ENCODE measurements at regions of chr6 and their contacts with region 1.

Region 1: DNA sequence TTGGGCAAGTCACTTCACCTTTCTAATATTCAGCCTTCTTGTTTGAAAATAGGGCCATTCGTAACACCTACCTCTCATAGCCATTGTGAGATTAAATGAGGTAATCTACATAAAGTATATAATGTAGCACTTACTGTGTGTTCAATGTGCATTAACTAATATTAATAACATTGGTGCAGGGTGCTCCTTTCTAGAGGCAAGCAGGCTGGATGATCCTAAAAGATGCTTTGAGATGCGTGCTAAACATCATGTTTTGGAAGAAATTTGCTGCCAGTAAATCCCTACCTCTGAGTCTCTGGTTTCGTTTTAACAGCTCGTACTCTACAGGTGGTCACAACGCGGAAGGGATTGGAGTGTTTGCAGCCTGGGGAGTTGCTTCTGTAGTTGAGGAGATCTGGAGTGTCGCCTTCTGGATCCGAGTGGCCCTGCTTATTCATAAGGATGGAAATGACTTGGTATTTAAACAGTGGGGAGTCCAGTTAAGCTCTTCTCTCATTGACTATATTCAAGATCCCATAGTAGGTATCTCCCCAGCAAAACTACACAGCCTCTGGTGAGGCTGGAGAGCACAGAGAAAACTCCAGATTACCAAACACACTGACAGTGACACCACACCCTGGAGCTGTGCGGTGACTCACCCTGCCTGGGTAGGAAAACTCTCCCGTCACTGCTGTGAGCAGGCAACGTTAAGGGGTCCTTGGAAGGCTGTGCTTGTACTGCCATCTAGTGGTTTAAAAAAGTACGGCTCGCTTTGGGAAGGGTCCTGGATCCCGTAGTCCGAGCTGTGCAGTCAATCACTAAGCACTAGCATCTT is 107.9 kb downstream of the MAP3K7 start:
- DNase-seq: peak; percentile 79
- H3K4me3 ChIP-seq: no peak overlapping the region
- H3K27ac ChIP-seq: no peak overlapping the region
- H3K4me1 ChIP-seq: peaks cover 5 to 7% of the 10 kb centered on the region in 2 experiments; a peak in 3 of 4 replicates
- H3K27me3 ChIP-seq: no peaks in the 10 kb centered on the region
- CTCF ChIP-seq: peak; percentile 89
- EP300 ChIP-seq: no peak
- RAD21 ChIP-seq: peak; percentile 100

Region 2: DNA sequence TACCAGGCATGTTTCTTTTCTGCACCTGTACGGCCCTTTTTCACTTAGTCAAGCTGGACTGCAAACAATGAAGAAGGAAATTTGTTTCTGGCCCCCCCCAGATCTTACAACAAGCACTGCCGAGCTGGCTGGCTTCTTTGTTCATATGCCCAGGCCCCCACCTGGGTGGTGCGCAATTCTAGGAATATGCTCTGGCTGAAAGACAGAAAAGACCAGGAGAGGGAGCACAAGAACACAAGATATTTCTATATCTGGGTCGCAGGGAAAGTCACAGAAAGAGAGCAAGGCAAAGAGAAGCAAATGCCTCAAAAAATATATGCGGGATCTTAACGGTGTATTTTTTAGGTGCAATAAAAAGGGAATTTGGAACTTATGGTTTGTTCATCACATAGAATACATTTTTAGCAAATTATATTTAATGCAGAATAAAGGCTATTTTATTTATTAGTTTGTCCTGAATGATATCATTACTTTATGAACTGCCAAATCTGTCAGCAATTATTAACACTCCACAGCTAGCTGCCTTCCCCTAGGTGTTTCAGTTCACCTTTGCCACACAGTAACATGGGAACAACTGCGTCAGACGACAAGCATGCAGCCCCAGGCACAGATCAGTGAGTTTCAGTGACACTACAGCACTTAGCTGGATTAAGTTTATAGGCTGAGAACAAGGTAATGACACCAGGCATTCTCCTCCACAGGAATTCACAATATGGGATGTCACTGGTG is 508.2 kb before region 1 on chr6:
- CTCF ChIA-PET with region 1: interaction called, 114 read pairs
- POLR2A ChIA-PET with region 1: no interaction called
- DNase-seq: peak; percentile 67
- H3K4me3 ChIP-seq: no peak overlapping the region
- H3K27ac ChIP-seq: peak overlapping the region in 1 of 2 experiments; percentile 58; a peak in 2 of 4 replicates
- H3K4me1 ChIP-seq: peaks cover 0 to 24% of the 10 kb centered on the region in 2 experiments; a peak in 2 of 4 replicates
- H3K27me3 ChIP-seq: 0 out of 2 replicates have a peak, but pooled peaks cover under 1% of the 10 kb centered on the region
- CTCF ChIP-seq: peak; percentile 79
- EP300 ChIP-seq: no peak
- RAD21 ChIP-seq: peak; percentile 95

Region 3: DNA sequence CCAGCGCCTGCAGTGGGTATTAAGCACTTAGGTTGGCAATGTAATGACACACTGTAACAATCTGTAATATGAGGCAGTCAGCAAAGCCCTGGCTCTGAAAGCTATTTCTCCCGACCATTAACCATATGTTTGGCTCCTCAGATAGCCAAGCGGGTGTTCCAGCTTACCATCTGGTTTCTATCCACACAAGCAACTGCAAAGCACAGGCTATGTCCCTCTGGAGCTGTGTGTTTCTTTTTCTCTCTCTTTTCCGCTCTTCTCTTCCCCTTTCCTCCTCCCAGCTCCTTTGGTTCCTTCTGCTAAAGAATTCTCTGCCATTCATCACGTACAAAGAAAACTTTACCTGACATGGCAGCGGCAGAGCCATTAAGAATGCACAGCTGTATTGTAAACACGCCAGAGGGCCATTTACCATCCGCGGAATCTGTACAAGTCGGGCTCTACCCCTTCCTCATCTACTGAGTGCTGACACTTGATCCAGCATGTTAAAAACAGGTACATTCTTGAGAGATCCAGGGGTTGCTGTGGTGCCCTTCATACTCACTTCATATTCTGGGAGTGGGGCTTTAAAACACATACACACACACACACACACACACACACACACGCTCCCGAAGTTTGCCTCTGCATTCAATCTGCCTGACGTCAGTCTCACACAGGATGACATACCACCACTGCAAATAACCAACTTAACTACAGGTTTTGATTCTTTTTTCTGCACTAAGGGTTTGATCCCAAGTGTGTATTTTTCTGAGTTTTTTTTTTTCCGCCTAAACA is 259.6 kb before region 1 on chr6:
- CTCF ChIA-PET with region 1: interaction called, 10 read pairs
- POLR2A ChIA-PET with region 1: no interaction called
- DNase-seq: peak; percentile 64
- H3K4me3 ChIP-seq: peak overlapping the region; percentile 36 to 48
- H3K27ac ChIP-seq: peak overlapping the region; percentile 96 to 97
- H3K4me1 ChIP-seq: peaks cover 34 to 45% of the 10 kb centered on the region in 2 experiments; a peak in 3 of 4 replicates
- H3K27me3 ChIP-seq: no peaks in the 10 kb centered on the region
- CTCF ChIP-seq: no peak
- EP300 ChIP-seq: peak; percentile 26 to 76; a peak in 3 of 4 replicates
- RAD21 ChIP-seq: peak; percentile 17; the same call in 1 of the 2 replicates

Region 4: DNA sequence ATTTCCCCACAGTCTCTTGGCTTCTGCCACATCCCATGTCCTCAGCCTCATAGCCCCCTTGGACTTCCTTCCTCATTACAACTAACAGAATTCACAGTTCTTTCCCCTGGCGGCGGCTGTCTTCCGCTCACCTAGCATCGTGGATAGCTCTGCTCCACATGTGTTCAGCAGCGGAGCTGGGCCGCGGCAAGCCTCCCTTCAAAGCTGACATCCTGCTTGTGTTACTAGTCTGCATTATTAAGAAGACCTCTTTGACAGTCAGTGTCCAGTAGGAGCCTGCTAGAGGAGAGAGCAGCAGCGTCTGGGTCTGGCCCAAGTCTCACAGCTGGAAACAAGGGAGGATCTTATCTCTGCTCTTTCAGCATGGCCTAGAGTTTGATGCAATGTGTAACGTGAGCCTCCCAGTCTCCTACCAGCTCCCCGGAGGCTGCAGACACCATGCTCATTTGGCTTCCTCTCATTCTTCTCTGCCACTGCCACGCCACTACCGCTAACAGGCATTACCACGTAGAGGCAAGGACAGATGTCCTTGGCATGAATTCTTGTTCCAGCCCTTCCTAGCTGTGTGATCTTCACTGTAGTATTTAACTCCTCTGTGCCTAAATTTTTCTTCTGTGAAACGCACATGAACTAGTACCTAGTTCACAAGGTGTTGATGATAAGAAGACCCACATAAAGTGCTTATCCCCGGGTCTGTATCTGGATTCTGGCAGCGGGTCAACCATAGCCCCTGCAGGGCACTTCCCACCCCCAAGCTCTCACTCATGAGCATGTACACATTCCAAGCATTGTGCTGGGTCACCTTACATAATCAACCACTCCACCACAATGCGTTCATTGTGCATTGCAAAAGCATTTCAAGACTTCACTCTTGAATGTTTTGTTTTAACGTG is 75.3 kb before region 1 on chr6:
- CTCF ChIA-PET with region 1: interaction called, 12 read pairs
- POLR2A ChIA-PET with region 1: no interaction called
- DNase-seq: peak; percentile 73
- H3K4me3 ChIP-seq: no peak overlapping the region
- H3K27ac ChIP-seq: peak overlapping the region in 1 of 2 experiments; percentile 43; a peak in 1 of 4 replicates
- H3K4me1 ChIP-seq: peaks cover 0 to 11% of the 10 kb centered on the region in 2 experiments; a peak in 2 of 4 replicates
- H3K27me3 ChIP-seq: no peaks in the 10 kb centered on the region
- CTCF ChIP-seq: no peak
- EP300 ChIP-seq: no peak
- RAD21 ChIP-seq: no peak; the same call in 1 of the 2 replicates

Region 5: DNA sequence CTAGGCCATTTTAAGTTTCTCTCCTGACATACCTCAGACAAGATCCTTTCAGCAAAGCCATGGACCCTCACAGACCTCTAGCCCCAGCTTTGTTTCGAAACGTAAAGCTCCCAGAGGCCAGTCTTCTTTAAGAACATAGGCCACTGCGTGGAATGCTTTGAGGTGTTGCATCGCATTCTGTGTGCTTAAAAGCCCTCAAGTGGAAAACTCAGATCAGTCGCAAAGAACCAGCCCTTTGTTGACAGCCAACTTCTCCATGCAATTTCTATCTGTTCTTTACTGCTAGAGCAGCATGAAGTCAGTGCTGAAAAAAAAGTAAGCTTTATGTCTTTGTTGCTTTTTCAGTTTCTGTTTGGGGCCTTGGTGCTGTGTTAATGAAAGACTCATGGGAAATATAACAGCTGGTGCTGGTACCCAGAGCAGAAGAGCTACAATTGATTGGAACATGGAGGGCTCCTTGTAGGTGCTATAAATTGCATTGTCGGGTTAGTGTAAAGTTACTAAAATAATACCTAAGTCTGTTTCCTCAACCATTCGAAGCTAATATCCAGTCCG is 34.8 kb before region 1 on chr6:
- CTCF ChIA-PET with region 1: interaction called, 17 read pairs
- POLR2A ChIA-PET with region 1: no interaction called
- DNase-seq: no peak
- H3K4me3 ChIP-seq: no peak overlapping the region
- H3K27ac ChIP-seq: no peak overlapping the region
- H3K4me1 ChIP-seq: peaks cover 0 to 18% of the 10 kb centered on the region in 2 experiments; a peak in 2 of 4 replicates
- H3K27me3 ChIP-seq: peaks cover 5% of the 10 kb centered on the region
- CTCF ChIP-seq: no peak
- EP300 ChIP-seq: no peak
- RAD21 ChIP-seq: no peak

Region 6: DNA sequence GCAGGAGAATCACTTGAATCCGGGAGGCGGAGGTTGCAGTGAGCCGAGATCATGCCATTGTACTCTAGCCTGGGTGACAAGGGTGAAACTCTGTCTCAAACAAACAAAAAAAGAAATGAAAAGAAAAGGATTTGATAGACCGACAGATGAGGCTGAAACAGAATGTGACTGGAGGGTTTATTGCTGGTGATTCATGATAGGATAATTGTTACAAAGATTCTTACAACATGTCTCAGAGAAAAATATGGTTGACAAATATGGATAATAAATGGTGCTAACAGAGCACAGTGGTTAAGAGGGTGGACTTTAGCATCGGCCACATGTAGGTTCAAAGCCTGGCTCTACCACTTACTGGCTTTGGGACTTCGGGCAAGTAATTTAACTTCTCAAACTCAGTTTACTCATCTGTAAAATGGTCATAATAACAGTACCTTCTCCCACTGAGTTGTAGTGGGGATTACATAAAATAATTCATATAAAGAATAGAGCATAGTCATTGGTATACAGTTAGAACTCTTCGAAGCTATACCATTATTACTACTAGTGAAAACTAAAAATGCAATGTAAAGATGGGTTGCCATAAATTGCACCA is 24.1 kb before region 1 on chr6:
- CTCF ChIA-PET with region 1: interaction called, 12 read pairs
- POLR2A ChIA-PET with region 1: no interaction called
- DNase-seq: no peak
- H3K4me3 ChIP-seq: no peak overlapping the region
- H3K27ac ChIP-seq: no peak overlapping the region
- H3K4me1 ChIP-seq: no peaks in the 10 kb centered on the region
- H3K27me3 ChIP-seq: no peaks in the 10 kb centered on the region
- CTCF ChIP-seq: no peak
- EP300 ChIP-seq: no peak
- RAD21 ChIP-seq: no peak

Region 7: DNA sequence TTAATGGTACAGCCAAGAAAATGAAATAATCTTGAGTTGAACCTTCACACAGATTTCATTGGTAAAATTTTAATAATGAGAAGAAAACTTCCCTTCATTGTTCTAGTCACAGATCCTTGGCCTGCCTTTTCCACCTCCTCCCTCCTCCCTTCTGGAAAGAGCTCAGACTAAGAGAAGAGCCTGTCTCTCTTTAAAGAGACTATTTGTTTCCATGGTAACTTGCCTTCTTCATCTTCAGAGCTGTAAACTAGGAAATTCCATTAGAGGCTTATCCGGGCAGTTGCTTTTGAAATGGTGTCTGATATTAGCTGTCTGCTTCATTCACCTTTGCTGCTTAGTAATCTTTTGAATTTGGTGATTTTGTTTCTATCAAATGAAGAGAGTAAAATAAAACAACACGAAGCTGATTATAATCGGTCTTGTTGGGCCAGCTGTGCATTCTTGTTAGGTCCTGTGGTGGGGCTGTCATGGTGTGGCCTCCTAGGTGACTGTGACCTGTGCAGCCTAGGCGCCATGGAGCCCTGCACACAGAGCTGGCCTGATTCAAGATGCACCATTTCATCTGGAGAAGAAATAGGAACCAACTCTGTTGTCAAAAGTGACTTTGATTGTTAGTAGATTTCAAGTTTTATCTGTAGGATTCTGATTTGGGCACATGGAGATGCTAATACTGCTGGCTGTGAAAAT is 11.2 kb after region 1 on chr6:
- CTCF ChIA-PET with region 1: interaction called, 44 read pairs
- POLR2A ChIA-PET with region 1: no interaction called
- DNase-seq: no peak
- H3K4me3 ChIP-seq: no peak overlapping the region
- H3K27ac ChIP-seq: no peak overlapping the region
- H3K4me1 ChIP-seq: no peaks in the 10 kb centered on the region
- H3K27me3 ChIP-seq: no peaks in the 10 kb centered on the region
- CTCF ChIP-seq: no peak
- EP300 ChIP-seq: no peak
- RAD21 ChIP-seq: no peak

Region 8: DNA sequence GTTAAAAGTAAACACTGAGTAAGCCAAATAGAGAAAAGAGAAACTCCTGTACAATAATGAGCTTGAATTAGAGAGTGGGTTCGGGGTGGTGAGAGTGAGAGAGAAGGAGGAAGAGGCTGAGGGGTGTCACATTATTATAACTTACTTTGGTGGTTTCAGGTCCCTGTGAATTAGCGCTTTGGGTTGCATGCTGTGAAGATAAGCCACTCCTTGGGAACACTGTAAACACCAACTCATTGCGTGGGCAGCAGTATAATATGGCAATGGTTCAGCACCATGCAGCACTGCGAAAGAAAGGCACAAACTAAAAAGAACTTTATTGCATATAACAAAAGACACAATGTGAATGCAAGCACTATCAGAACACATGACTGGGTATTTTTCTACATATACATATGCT is 80.9 kb after region 1 on chr6:
- CTCF ChIA-PET with region 1: no interaction called
- POLR2A ChIA-PET with region 1: no interaction called
- DNase-seq: no peak
- H3K4me3 ChIP-seq: no peak overlapping the region
- H3K27ac ChIP-seq: no peak overlapping the region
- H3K4me1 ChIP-seq: no peaks in the 10 kb centered on the region
- H3K27me3 ChIP-seq: no peaks in the 10 kb centered on the region
- CTCF ChIP-seq: no peak
- EP300 ChIP-seq: no peak
- RAD21 ChIP-seq: no peak